ENCODE measurements at regions of chr11 and their contacts with region 1.

Region 1: GRCh38 chr11:8092587-8093424 is 11.8 kb downstream of the TUB start:
- DNase-seq: no peak
- H3K4me3 ChIP-seq: no peak overlapping the region
- H3K27me3 ChIP-seq: no peaks in the 10 kb centered on the region
- CTCF ChIP-seq: peak; percentile 87

Region 2: GRCh38 chr11:8018484-8019313 is 74.1 kb before region 1 on chr11:
- CTCF ChIA-PET with region 1: interaction called, 60 read pairs
- POLR2A ChIA-PET with region 1: no interaction called
- DNase-seq: no peak
- H3K4me3 ChIP-seq: peak overlapping the region; percentile 47
- H3K27me3 ChIP-seq: no peaks in the 10 kb centered on the region
- CTCF ChIP-seq: no peak

Region 3: DNA sequence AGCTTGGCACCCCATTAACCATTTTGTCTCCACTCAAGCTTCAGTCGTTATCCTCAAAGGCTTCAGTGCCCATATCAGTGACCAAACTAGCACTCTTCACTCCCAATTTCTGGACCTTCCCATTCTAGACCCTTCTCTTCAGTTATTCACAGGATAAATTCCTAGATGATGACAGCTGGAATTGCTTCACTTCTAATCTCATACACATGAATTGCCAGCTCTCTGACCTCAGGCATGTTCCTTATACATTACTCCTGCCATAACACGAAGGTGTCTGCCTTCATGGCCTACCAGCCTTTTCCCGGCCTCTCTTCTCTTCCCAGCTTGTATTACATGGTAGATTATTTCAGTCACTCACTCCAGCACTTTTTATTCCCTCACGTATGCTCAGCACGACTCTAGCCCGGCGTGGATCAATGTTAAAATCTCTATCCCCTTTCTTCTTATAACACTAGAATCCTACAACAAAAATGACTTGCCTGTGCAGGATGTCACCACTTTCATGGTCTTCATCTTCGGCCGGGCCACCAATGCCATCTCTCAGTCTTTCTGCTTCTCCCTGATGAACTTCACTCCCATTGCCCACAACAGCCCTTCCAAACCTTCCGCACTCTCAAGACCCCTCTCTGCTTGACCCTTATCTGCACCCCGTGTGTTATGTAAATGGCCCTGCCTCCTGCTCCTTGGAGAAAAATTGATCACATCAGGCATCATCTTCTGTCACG is 68.8 kb before region 1 on chr11:
- CTCF ChIA-PET with region 1: interaction called, 441 read pairs
- POLR2A ChIA-PET with region 1: no interaction called
- DNase-seq: no peak
- H3K4me3 ChIP-seq: no peak overlapping the region
- H3K27me3 ChIP-seq: no peaks in the 10 kb centered on the region
- CTCF ChIP-seq: no peak

Region 4: DNA sequence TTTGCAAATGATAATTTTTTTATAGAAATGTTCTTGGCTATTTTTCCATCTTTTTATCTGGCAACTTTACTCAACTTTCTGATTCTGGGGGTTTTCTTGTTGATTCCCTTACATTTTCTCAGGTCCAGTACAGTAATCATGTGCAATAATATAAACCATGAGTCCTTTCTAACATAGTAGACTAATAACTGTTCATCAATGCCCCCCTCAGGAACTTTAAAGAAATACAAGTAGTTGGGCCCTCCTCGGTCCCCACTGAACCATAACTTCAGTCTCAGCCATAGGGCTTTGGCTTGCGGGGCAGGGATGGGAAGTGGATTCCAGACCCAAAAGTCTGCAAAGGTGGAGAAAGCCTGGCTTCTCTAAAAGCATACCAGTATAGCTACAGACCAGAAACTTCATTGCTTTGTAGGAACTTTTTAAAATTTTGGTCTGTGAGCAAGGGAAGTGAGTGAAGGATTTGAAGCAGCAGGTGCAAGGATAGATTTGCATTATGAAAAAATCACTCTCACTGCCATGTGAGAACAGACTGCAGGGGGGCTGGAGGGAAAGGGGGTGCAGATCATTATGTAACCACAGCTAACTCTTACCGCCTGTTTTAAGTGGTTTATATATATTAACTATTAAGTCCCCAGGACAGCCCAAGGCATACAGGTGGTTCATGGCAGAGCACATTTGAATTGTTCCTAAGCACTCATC is 22.2 kb before region 1 on chr11:
- CTCF ChIA-PET with region 1: interaction called, 12 read pairs
- POLR2A ChIA-PET with region 1: no interaction called
- DNase-seq: no peak
- H3K4me3 ChIP-seq: no peak overlapping the region
- H3K27me3 ChIP-seq: no peaks in the 10 kb centered on the region
- CTCF ChIP-seq: peak; percentile 50

Region 5: DNA sequence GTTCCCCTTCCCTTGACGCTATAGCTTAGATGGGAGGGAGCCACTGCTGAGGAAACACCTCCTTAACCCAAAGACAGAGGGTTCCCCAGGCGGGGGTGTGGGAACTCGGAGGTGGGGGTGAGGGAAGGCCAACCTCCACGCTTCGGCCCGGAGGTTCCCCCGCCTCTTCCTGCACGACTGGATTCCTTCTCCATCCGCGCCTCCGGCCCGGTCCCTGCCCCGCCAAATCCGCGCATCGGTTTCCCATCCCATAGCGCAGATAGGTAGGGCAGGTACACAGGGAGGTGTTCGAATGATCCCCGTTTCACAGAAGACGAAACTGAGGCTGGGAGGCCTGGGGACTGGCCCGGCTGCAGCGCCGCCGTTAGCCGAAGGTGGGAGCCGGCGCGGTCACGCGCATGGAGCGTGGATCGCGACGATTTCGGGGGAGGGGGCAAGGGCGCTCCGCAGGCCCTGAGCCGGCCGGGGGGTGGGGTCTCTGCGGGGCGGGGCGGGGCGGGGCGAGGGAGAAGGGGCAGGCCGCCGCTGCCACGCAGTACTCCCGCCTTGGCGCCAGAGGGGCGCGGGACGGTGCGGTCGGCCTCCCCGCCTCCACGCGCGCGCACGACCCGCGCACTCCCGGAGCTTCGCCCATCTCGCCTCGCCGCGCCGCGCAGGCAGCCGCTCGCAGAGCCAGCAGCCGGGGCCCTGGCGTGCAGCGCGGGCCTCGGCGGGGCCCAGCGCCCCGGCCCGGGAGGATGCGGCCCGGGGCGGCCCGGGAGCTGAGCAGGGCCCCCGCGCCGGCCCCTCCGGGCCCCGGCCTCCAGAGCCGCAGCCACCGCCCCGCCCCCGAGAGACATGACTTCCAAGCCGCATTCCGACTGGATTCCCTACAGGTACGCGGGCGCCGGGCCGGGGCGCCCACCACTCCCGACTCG is 11.9 kb before region 1 on chr11 and contains the start of gene TUB:
- CTCF ChIA-PET with region 1: interaction called, 105 read pairs
- POLR2A ChIA-PET with region 1: no interaction called
- DNase-seq: no peak
- H3K4me3 ChIP-seq: peak within 1 kb of the TSS; percentile 62
- H3K27me3 ChIP-seq: no peaks in the 10 kb centered on the region; the same call in 1 of the 2 replicates
- CTCF ChIP-seq: 0 out of 2 replicates have a peak, but pooled peaks have one; percentile 13
- polyA plus RNA-seq, gene TUB: 9.8 and 11.8 TPM in 2 replicates

Region 6: DNA sequence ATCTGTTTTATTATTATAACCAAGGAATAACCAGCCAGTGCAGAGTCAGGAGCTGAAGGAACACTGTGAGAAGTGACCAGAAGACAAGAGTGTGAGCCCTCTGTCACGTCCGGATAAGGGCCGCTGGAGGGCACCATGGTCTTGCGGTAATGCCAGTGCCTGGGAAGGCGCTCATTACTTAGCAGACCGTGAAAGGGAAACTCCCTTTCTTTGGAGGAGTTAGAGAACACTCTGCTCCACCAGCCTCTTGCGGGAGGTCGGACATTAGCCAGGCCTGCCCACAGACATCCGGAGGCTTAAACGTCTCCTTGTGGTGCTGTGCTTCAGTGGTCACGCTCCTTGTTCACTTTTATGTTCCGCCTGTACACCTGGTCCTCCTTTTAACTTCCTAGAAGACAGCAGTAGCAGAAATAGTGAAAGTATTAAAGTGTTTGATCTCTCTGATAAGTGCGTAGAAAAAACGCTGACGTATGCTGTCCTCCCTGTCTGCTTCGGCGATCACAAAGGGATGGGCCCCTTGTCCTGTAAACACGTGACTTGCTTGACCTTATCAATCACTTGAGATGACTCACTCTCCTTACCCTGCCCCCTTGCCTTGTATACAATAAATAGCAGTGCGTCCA is 291.5 kb after region 1 on chr11:
- CTCF ChIA-PET with region 1: no interaction called
- POLR2A ChIA-PET with region 1: no interaction called
- DNase-seq: peak; percentile 1
- H3K4me3 ChIP-seq: no peak overlapping the region
- H3K27me3 ChIP-seq: no peaks in the 10 kb centered on the region
- CTCF ChIP-seq: 0 out of 2 replicates have a peak, but pooled peaks have one; percentile 9